ENCODE measurements at regions of chr16 and their contacts with region 1.

Region 1: GRCh38 chr16:66608241-66609138 is 4.0 kb downstream of the CMTM3 start:
- DNase-seq: no peak
- H3K4me3 ChIP-seq: no peak overlapping the region
- H3K27ac ChIP-seq: peak overlapping the region in 3 of 4 donors; percentile 3 to 34 (median 28)
- H3K4me1 ChIP-seq: peaks cover 24 to 46% (median 44%) of the 10 kb centered on the region in 4 donors
- H3K27me3 ChIP-seq: peaks cover 0 to 27% (median 0%) of the 10 kb centered on the region in 4 donors
- CTCF ChIP-seq: peak; percentile 79 to 95 (median 83)
- EP300 ChIP-seq: no peak
- POLR2A ChIP-seq: no peak

Region 2: GRCh38 chr16:66406534-66407221 is 201.8 kb before region 1 on chr16:
- intact Hi-C with region 1: loop called (anchors 5 kb)
- DNase-seq: peak; percentile 98
- H3K4me3 ChIP-seq: peak overlapping the region; percentile 52 to 63 (median 54)
- H3K27ac ChIP-seq: peak overlapping the region in 2 of 4 donors; percentile 35 to 51
- H3K4me1 ChIP-seq: peaks cover 12 to 20% (median 17%) of the 10 kb centered on the region in 4 donors
- H3K27me3 ChIP-seq: peaks cover 0 to 20% (median 0%) of the 10 kb centered on the region in 4 donors
- CTCF ChIP-seq: peak; percentile 83 to 89 (median 86)
- EP300 ChIP-seq: no peak
- POLR2A ChIP-seq: no peak

Region 3: DNA sequence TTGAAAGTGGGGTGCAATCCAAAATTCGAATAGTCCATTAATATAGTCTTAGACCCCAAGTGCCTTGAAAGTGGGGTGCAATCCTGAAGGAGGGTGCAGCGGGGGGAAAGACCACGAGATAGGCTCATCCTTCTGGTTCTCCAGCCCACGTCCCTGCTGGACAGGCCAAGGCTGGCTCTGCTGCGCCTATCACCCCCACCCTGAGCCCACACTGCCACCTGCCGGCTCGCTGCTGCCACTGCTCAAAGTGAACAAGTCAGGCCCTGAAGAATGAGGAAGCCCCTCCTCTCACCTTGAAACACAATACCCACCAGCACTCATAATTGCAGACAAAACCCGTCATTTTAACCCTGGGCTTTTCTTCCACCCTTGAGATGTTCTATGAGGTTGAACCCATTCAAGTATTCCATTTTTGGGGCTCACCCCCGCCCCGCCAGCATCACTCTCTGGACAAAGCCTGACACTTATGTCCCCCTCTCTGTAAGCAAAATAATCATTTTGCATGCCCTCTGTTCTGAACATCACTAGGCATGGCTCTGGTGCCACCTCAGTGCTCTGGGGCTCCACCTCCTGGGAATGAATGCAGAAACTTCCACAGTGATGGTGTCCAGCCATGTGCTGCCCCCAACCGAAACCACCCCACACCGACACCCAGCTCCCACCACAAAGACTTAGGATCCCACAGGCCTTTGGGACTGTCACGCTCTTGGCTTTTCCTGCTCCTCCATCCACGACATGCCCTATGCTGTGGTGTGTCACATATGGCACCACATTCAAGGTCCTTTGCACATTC is 124.6 kb before region 1 on chr16:
- intact Hi-C with region 1: loop called (anchors 5 kb)
- DNase-seq: no peak
- H3K4me3 ChIP-seq: no peak overlapping the region
- H3K27ac ChIP-seq: no peak overlapping the region
- H3K4me1 ChIP-seq: peaks cover 12 to 24% (median 22%) of the 10 kb centered on the region in 4 donors
- H3K27me3 ChIP-seq: no peaks in the 10 kb centered on the region
- CTCF ChIP-seq: peak; percentile 85 to 94 (median 91)
- EP300 ChIP-seq: no peak
- POLR2A ChIP-seq: no peak

Region 4: DNA sequence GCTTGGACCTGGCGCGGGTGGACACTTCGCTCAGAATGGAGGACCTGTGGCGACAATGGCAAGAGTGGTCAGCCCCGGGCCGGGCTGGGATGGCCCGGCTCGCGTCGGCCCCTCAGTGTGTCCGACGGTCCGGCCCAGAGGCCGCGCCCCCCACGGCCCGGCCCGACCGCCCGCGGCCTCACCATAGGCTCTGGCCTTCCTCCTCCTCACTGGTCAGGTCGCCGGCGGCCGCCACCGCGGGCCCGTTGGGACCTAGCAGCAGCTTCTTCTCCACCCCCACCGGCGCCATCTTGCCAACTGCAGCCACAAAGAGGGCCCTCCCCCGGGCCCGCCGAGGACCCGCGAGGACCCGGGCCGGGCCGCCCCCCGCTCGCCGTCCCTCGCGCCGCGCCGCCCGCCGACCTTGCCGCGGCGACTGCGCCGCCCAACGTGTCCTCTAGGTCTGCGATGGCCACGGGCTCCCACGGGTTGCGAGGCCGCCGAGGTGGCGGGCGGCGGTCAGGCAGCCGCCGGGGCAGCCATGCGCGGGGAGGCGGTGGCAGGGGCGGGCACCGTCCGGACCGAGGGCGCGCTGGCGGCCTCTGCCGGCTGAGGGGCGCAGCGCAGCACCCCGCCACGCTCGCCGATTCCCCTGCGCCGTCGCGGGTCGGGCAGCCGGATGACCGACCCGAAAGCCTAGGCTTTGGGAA is 143.0 kb after region 1 on chr16 and contains the start of gene DYNC1LI2:
- intact Hi-C with region 1: loop called (anchors 5 kb)
- DNase-seq: no peak
- H3K4me3 ChIP-seq: peak within 1 kb of the TSS; percentile 85 to 100 (median 93)
- H3K27ac ChIP-seq: peak within 1 kb of the TSS; percentile 89 to 96 (median 90)
- H3K4me1 ChIP-seq: peaks cover 30 to 57% (median 51%) of the 10 kb centered on the region in 4 donors
- H3K27me3 ChIP-seq: no peaks in the 10 kb centered on the region
- CTCF ChIP-seq: peak; percentile 91 to 98 (median 93)
- EP300 ChIP-seq: no peak
- POLR2A ChIP-seq: no peak
- total RNA-seq, gene DYNC1LI2: 167 to 203 (median 186) TPM

Region 5: DNA sequence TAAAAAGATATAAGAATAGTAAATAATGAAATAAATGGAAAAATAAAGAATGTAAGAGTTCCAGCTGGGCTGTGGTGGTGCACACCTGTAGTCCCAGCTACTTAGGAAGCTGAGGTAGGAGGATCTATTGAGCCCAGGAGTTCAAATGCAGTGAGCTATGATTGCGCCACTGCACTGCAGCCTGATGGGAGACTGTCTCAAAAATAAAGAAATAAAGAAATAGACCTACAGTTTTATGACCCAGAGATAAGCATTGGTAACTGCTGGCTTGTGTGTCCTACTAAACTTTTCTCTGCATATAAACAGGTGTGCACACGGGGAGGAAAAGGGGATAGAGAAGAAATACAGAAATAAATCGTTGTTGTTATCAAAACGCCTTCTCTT is 264.1 kb after region 1 on chr16:
- intact Hi-C with region 1: loop called (anchors 5 kb)
- DNase-seq: no peak
- H3K4me3 ChIP-seq: peak overlapping the region; percentile 37 to 51 (median 44)
- H3K27ac ChIP-seq: peak overlapping the region in 3 of 4 donors; percentile 18 to 35 (median 34)
- H3K4me1 ChIP-seq: peaks cover 6 to 23% (median 15%) of the 10 kb centered on the region in 4 donors
- H3K27me3 ChIP-seq: no peaks in the 10 kb centered on the region
- CTCF ChIP-seq: no peak
- EP300 ChIP-seq: no peak
- POLR2A ChIP-seq: no peak